ENCODE measurements at regions of chr2 and their contacts with region 1.

Region 1: GRCh38 chr2:209334198-209335017 is 89.4 kb upstream of the MAP2 start:
- DNase-seq: no peak
- H3K4me3 ChIP-seq: no peak overlapping the region
- H3K27ac ChIP-seq: no peak overlapping the region
- H3K4me1 ChIP-seq: peaks cover 3 to 6% (median 5%) of the 10 kb centered on the region in 4 donors
- H3K27me3 ChIP-seq: no peaks in the 10 kb centered on the region
- CTCF ChIP-seq: peak; percentile 76 to 84 (median 82)
- EP300 ChIP-seq: no peak
- POLR2A ChIP-seq: no peak

Region 2: DNA sequence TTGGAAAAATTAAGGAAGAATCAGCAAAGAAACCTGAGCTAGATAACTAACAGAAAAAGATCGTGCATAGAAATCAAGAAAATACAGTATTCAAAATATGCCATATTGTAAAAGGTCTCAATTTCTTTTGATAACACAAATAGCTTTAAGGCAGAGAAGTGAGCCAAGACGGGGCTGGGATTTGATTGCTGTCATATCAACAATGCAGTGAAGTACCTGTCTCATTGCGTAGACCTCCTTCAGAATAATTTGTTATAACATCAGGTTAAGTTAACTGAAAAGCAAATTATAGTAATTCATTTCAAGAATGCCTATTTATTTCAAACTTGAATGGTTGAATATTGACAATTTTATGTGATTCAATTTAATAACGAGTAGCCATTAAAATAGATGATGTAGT is 364.3 kb before region 1 on chr2:
- intact Hi-C with region 1: no loop called
- DNase-seq: no peak
- H3K4me3 ChIP-seq: no peak overlapping the region
- H3K27ac ChIP-seq: no peak overlapping the region
- H3K4me1 ChIP-seq: no peaks in the 10 kb centered on the region
- H3K27me3 ChIP-seq: no peaks in the 10 kb centered on the region
- CTCF ChIP-seq: no peak
- EP300 ChIP-seq: no peak
- POLR2A ChIP-seq: no peak

Region 3: DNA sequence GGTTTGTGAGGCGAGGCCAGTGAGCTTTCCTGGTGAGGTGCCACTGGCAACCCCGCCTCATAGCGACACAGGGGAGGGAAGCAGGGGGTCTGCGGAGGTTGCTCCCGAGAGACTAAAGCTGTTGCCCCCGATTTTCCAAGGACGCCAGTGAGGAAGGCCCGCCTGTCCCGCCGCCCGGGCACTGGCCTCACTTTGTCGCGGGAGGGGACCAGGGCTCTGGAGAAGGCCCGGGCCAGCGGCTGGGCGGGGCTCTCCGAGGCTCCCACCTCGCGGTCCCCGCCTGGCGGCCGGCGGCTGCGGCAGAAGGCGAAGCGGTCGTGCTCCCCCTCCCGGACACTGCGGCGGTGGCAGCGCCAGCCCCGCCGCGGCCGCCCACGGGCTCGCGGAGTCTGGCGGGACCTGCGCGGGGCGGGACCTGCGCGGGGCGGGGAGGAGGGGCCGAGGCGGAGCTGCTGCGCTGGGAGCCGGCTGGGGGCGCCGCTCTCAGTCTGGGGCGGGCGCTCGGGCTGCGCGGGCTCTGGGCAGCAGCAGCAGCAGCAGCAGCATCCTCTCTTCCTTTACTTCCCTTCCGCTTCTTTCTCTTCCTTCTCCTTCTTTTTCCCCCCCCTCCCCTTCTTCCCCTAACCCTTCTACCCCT is 89.3 kb after region 1 on chr2 and contains the start of gene MAP2:
- intact Hi-C with region 1: loop called (anchors 2 kb)
- DNase-seq: no peak
- H3K4me3 ChIP-seq: peak within 1 kb of the TSS; percentile 64 to 74 (median 66)
- H3K27ac ChIP-seq: peak within 1 kb of the TSS in 3 of 4 donors; percentile 46 to 59 (median 52)
- H3K4me1 ChIP-seq: peaks cover 0 to 29% (median 23%) of the 10 kb centered on the region in 4 donors
- H3K27me3 ChIP-seq: no peaks in the 10 kb centered on the region
- CTCF ChIP-seq: peak; percentile 80 to 95 (median 83)
- EP300 ChIP-seq: no peak
- POLR2A ChIP-seq: no peak
- total RNA-seq, gene MAP2: 11.1 to 62.6 (median 47.0) TPM

Region 4: GRCh38 chr2:209512971-209513370 is 178.6 kb after region 1 on chr2:
- intact Hi-C with region 1: no loop called
- DNase-seq: no peak
- H3K4me3 ChIP-seq: no peak overlapping the region
- H3K27ac ChIP-seq: no peak overlapping the region
- H3K4me1 ChIP-seq: no peaks in the 10 kb centered on the region
- H3K27me3 ChIP-seq: no peaks in the 10 kb centered on the region
- CTCF ChIP-seq: no peak
- EP300 ChIP-seq: no peak
- POLR2A ChIP-seq: no peak

Region 5: GRCh38 chr2:209577376-209578357 is 243.3 kb after region 1 on chr2:
- intact Hi-C with region 1: loop called (anchors 5 kb)
- DNase-seq: no peak
- H3K4me3 ChIP-seq: no peak overlapping the region
- H3K27ac ChIP-seq: no peak overlapping the region
- H3K4me1 ChIP-seq: peaks cover 0 to 3% (median 0%) of the 10 kb centered on the region in 4 donors
- H3K27me3 ChIP-seq: no peaks in the 10 kb centered on the region
- CTCF ChIP-seq: peak; percentile 18 to 39 (median 37)
- EP300 ChIP-seq: no peak
- POLR2A ChIP-seq: no peak

Measured in esophagus muscularis mucosa (tissue), 4 donors.